Posterior vena cava (tissue), 2 donors: ENCODE measurements at regions of chr9 and their contacts with region 1.

Region 1: GRCh38 chr9:16213781-16214515 is 656.5 kb downstream of the BNC2 start:
- DNase-seq: no peak

Region 2: DNA sequence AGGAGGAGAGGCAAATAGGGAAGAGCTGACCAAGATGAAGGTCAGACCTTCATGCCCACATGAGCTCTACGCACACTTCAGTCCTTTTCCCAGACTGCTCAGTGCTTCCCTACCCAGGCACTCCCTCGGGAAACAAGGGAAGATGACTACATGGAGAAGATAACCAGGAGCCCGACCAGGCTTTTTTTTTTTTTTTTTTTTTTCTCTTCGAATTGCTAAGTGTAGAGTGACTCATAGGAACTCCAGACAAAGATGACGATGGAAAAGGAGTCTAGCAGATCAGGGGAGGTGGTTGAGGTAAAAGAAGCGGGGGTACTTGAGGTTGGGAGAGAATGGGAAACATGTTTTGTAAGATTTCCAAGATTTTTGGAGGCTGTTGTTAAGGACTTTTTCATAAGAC is 130.4 kb after region 1 on chr9:
- intact Hi-C with region 1: loop called in 1 of 2 experiments (anchors 10 kb)
- DNase-seq: no peak